Activated B cell treated with CpG ODN at 0.5 μM for 24 hours (primary cell): ENCODE measurements at regions of chr3 and their contacts with region 1.

Region 1: DNA sequence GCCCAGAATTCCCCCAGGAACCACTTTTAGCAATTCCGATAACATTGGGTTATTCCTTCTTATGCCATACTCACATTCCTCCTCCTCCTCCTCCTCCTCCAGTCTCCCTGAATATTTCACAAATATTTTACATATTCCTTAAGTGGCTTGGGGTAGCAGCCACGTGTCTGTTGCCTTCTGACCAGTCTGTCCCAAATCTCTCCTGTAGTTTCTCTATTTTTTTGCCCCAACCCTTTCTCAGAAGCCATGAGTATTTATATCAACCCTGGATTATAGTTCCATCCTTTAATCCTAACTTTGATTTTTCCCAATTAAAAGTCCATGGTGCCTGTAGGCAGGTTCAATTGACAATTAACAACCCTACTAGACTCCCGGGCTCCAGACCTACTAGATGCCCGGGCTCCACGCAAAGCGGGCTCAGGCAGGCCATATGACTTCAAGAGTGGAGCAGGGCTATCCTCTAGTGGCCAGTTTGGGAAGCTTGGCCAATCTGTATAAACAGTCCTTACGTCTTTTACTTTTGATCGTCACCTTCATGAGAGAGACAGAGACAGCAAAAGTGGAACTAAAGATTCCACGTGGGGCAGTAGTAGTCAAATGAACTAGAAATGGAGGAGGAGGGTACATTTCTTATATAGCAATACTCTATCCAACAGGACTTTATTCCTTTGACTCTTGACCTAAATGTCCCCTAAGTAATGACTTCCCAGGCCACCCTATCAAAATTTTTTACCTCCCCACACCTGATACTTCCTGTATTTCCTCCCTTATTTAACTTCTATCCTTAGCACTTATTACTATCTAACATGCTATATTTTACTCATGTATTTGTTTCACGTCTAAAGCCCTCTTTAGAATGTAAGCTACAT is 69.7 kb downstream of the USF3 start:
- DNase-seq: no peak
- ATAC-seq: peak; percentile 90
- H3K4me3 Mint-ChIP-seq: peak overlapping the region; percentile 84
- H3K27ac Mint-ChIP-seq: peak overlapping the region; percentile 87
- H3K4me1 Mint-ChIP-seq: peaks cover 57% of the 10 kb centered on the region
- H3K27me3 Mint-ChIP-seq: no peaks in the 10 kb centered on the region
- CTCF ChIP-seq: no peak

Region 2: DNA sequence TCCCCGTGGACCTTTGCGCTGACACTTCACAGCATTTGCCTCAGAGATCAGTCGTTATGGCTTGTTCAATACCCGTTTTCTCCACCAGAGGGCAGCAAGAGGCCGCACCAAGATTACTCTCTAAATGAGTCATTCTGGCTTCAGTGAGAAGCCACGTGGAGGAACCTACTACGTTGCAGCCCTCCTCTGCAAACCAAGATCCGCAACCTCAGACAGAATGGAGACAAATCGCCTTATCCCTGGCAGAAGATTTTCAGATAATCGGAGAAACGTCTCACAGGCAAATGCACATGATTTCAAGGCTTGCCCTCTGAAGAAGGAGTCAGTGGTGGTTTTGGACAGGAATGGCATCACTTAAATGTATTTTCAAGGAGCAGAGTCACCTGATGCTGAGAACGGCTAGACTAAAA is 575.4 kb before region 1 on chr3:
- CTCF ChIA-PET with region 1: no interaction called
- POLR2A ChIA-PET with region 1: no interaction called
- intact Hi-C with region 1: loop called (anchors 1 kb)
- DNase-seq: peak; percentile 68
- ATAC-seq: peak; percentile 99
- H3K4me3 Mint-ChIP-seq: no peak overlapping the region
- H3K27ac Mint-ChIP-seq: no peak overlapping the region
- H3K4me1 Mint-ChIP-seq: peaks cover 3% of the 10 kb centered on the region
- H3K27me3 Mint-ChIP-seq: no peaks in the 10 kb centered on the region
- CTCF ChIP-seq: no peak

Region 3: DNA sequence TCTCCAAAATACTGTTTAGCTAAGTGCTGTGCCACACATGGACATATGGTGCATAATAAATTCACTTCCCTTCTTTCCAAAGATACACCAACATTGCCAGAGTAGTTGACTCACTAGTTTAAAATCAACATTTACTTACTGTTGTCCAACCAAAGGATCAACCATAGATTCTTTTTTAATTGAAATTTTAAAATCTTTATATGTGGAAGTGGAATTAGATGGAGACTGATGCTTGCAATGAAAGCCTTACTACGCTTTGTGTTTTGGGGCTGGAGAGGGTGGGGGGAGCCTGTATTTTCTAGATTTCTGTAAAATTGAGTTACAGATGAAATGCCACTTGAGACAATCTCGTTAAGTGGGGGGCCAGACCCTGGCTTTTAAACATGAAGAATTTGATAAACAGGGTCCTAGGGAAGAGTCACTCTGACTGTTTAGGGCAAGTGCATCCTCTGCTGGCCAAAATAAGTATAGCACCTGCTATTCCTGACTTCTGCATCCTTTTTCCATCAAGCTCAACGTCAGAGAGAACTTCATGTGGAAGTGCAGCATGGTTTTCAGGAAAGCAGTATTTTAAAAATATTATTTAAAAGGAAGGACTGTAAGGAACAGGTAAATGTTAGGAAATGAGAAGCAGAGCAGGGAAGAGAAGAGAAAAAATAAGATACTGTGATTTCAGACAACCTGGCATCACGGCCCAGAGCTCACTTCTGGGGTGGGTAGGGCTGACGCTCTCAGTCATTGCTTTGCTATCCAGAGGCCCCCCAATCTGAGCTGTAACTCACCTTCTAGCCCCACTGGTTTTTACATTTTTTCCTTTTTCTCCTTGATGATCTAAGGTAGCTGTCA is 338.7 kb before region 1 on chr3:
- CTCF ChIA-PET with region 1: interaction called, 3 read pairs
- POLR2A ChIA-PET with region 1: no interaction called
- intact Hi-C with region 1: loop called (anchors 5 kb)
- DNase-seq: no peak
- ATAC-seq: peak; percentile 45
- H3K4me3 Mint-ChIP-seq: no peak overlapping the region
- H3K27ac Mint-ChIP-seq: no peak overlapping the region
- H3K4me1 Mint-ChIP-seq: no peaks in the 10 kb centered on the region
- H3K27me3 Mint-ChIP-seq: no peaks in the 10 kb centered on the region
- CTCF ChIP-seq: peak; percentile 59

Region 4: GRCh38 chr3:113514265-113514769 is 112.4 kb before region 1 on chr3:
- CTCF ChIA-PET with region 1: no interaction called
- POLR2A ChIA-PET with region 1: interaction called, 10 read pairs
- intact Hi-C with region 1: no loop called
- DNase-seq: no peak
- ATAC-seq: no peak
- H3K4me3 Mint-ChIP-seq: no peak overlapping the region
- H3K27ac Mint-ChIP-seq: no peak overlapping the region
- H3K4me1 Mint-ChIP-seq: peaks cover 7% of the 10 kb centered on the region
- H3K27me3 Mint-ChIP-seq: peaks cover 16% of the 10 kb centered on the region
- CTCF ChIP-seq: no peak

Region 5: GRCh38 chr3:113606539-113607218 is 20.1 kb before region 1 on chr3:
- CTCF ChIA-PET with region 1: interaction called, 3 read pairs
- POLR2A ChIA-PET with region 1: interaction called, 8 read pairs
- intact Hi-C with region 1: loop called (anchors 1 kb)
- DNase-seq: peak; percentile 26
- ATAC-seq: peak; percentile 96
- H3K4me3 Mint-ChIP-seq: peak overlapping the region; percentile 52
- H3K27ac Mint-ChIP-seq: peak overlapping the region; percentile 72
- H3K4me1 Mint-ChIP-seq: peaks cover 25% of the 10 kb centered on the region
- H3K27me3 Mint-ChIP-seq: no peaks in the 10 kb centered on the region
- CTCF ChIP-seq: no peak

Region 6: GRCh38 chr3:113668015-113668414 is 41.3 kb after region 1 on chr3:
- CTCF ChIA-PET with region 1: no interaction called
- POLR2A ChIA-PET with region 1: no interaction called
- intact Hi-C with region 1: loop called (anchors 2 kb)
- DNase-seq: no peak
- ATAC-seq: peak; percentile 31
- H3K4me3 Mint-ChIP-seq: peak overlapping the region; percentile 53
- H3K27ac Mint-ChIP-seq: peak overlapping the region; percentile 71
- H3K4me1 Mint-ChIP-seq: peaks cover 53% of the 10 kb centered on the region
- H3K27me3 Mint-ChIP-seq: no peaks in the 10 kb centered on the region
- CTCF ChIP-seq: no peak

Region 7: GRCh38 chr3:113685956-113686754 is 59.4 kb after region 1 on chr3:
- CTCF ChIA-PET with region 1: no interaction called
- POLR2A ChIA-PET with region 1: no interaction called
- intact Hi-C with region 1: no loop called
- DNase-seq: no peak
- ATAC-seq: no peak
- H3K4me3 Mint-ChIP-seq: no peak overlapping the region
- H3K27ac Mint-ChIP-seq: no peak overlapping the region
- H3K4me1 Mint-ChIP-seq: peaks cover 26% of the 10 kb centered on the region
- H3K27me3 Mint-ChIP-seq: no peaks in the 10 kb centered on the region
- CTCF ChIP-seq: no peak

Region 8: GRCh38 chr3:113728661-113729060 is 101.9 kb after region 1 on chr3:
- CTCF ChIA-PET with region 1: no interaction called
- POLR2A ChIA-PET with region 1: no interaction called
- intact Hi-C with region 1: loop called (anchors 5 kb)
- DNase-seq: no peak
- ATAC-seq: no peak
- H3K4me3 Mint-ChIP-seq: no peak overlapping the region
- H3K27ac Mint-ChIP-seq: no peak overlapping the region
- H3K4me1 Mint-ChIP-seq: peaks cover 10% of the 10 kb centered on the region
- H3K27me3 Mint-ChIP-seq: no peaks in the 10 kb centered on the region
- CTCF ChIP-seq: no peak